CD4-positive, alpha-beta memory T cell (primary cell): ENCODE measurements at regions of chr7 and their contacts with region 1.

Region 1: DNA sequence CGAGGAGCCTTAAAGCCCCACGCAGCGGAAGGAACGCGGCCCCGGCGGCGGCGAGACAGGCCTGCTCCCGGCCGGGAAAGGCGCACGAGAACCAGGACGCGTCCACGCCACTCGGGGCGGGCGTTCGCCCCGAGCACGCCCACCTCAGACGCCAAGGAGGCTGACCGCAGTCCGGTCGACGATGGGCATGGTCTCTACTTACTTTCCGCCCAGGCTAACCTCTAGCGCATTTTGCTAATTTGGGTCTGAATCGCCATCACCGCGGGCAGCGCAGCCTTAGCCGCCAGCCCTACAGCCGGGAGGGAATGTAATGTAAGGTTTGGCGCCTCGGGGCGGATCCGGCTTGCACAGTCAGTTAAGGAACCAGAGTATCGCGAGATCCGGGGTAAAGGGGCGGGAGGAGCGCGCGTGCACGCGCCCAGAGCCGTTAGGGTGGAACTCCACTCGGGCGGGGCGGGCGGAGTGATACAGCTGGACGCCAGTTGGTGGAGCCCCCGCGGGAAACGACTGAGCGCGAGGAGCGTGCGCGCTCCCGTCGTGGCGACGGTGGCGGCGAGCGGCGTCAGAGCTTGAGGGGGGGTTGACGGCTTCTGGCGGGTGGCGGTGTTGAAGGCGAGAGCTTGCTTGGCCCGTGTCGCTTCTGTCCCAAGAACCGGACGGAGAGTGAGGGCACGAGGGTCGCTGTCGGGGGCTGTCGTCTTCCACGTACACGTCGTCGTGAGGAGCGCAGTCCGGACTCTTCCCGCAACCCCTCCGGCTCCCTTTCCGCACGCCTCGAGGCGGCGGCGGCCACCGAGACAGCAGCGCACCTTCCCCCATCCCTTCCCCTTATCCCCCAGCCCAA is at the start of gene LUC7L2:
- DNase-seq: peak; percentile 99
- H3K4me3 ChIP-seq: peak within 1 kb of the TSS; percentile 90 to 100
- H3K4me3 Mint-ChIP-seq: peak within 1 kb of the TSS; percentile 96 to 100 (median 99)
- H3K27ac ChIP-seq: peak within 1 kb of the TSS; percentile 98
- H3K27ac Mint-ChIP-seq: peak within 1 kb of the TSS; percentile 98 to 99 (median 99)
- H3K4me1 ChIP-seq: peaks cover 47% of the 10 kb centered on the region
- H3K4me1 Mint-ChIP-seq: peaks cover 20 to 65% (median 38%) of the 10 kb centered on the region in 4 donors
- H3K27me3 ChIP-seq: no peaks in the 10 kb centered on the region
- H3K27me3 Mint-ChIP-seq: no peaks in the 10 kb centered on the region
- total RNA-seq, gene LUC7L2: 131 to 133 TPM

Region 2: GRCh38 chr7:138459413-138460175 is 900.0 kb before region 1 on chr7:
- CTCF ChIA-PET with region 1: no interaction called
- POLR2A ChIA-PET with region 1: no interaction called
- intact Hi-C with region 1: loop called (anchors 2 kb)
- DNase-seq: peak; percentile 98 to 99 (median 98)
- H3K4me3 ChIP-seq: peak overlapping the region in 1 of 2 donors; percentile 49
- H3K4me3 Mint-ChIP-seq: peak overlapping the region; percentile 73 to 94 (median 84)
- H3K27ac ChIP-seq: peak overlapping the region; percentile 2
- H3K27ac Mint-ChIP-seq: peak overlapping the region; percentile 58 to 95 (median 85)
- H3K4me1 ChIP-seq: peaks cover 15% of the 10 kb centered on the region
- H3K4me1 Mint-ChIP-seq: peaks cover 15 to 30% (median 23%) of the 10 kb centered on the region in 4 donors
- H3K27me3 ChIP-seq: no peaks in the 10 kb centered on the region
- H3K27me3 Mint-ChIP-seq: peaks cover 0 to 3% of the 10 kb centered on the region in 2 donors

Region 3: GRCh38 chr7:139133335-139134139 is 226.1 kb before region 1 on chr7:
- CTCF ChIA-PET with region 1: no interaction called
- POLR2A ChIA-PET with region 1: interaction called, 5 read pairs
- intact Hi-C with region 1: loop called (anchors 1 kb)
- DNase-seq: peak; percentile 86 to 89 (median 88)
- H3K4me3 ChIP-seq: peak overlapping the region; percentile 25 to 55
- H3K4me3 Mint-ChIP-seq: peak overlapping the region; percentile 87 to 97 (median 92)
- H3K27ac ChIP-seq: peak overlapping the region; percentile 56
- H3K27ac Mint-ChIP-seq: peak overlapping the region; percentile 73 to 97 (median 93)
- H3K4me1 ChIP-seq: peaks cover 14% of the 10 kb centered on the region
- H3K4me1 Mint-ChIP-seq: peaks cover 5 to 22% (median 17%) of the 10 kb centered on the region in 4 donors
- H3K27me3 ChIP-seq: no peaks in the 10 kb centered on the region
- H3K27me3 Mint-ChIP-seq: no peaks in the 10 kb centered on the region

Region 4: GRCh38 chr7:139340037-139340807 is 19.4 kb before region 1 on chr7:
- CTCF ChIA-PET with region 1: interaction called, 8 read pairs
- POLR2A ChIA-PET with region 1: interaction called, 107 read pairs
- intact Hi-C with region 1: loop called (anchors 1 kb)
- DNase-seq: peak; percentile 97 to 100 (median 98)
- H3K4me3 ChIP-seq: peak overlapping the region; percentile 95 to 96
- H3K4me3 Mint-ChIP-seq: peak overlapping the region; percentile 95 to 99 (median 98)
- H3K27ac ChIP-seq: peak overlapping the region; percentile 100
- H3K27ac Mint-ChIP-seq: peak overlapping the region; percentile 100
- H3K4me1 ChIP-seq: peaks cover 20% of the 10 kb centered on the region
- H3K4me1 Mint-ChIP-seq: peaks cover 17 to 45% (median 27%) of the 10 kb centered on the region in 4 donors
- H3K27me3 ChIP-seq: no peaks in the 10 kb centered on the region
- H3K27me3 Mint-ChIP-seq: peaks cover 3 to 6% of the 10 kb centered on the region in 2 donors

Region 5: DNA sequence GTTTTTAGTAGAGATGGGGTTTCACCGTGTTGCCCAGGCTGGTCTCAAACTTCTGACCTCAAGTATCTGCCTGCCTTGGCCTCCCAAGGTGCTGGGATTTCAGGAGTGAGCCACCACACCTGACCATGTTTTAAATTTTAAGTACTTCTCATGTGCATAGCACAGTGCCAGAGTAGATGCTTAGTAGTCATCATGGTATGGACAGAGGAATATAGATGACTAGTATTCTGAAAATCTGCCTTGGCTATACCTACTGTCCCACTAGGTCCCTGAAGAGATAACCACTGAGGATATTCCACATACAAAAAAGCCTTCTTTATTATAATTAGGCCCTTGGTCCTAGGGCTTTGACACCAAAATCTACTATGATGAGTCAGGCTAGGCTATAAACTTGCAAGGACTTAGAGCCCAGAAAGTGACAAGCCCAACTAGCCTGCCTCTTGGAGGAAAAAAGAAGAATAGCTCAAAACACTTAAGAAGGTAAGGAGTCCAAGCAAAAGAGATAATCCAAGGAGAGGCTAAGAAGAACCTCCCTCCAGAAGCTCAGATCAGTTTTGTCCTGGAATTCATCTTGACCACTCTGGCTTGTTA is 34.1 kb after region 1 on chr7:
- CTCF ChIA-PET with region 1: no interaction called
- POLR2A ChIA-PET with region 1: interaction called, 15 read pairs
- intact Hi-C with region 1: no loop called
- DNase-seq: no peak
- H3K4me3 ChIP-seq: no peak overlapping the region
- H3K4me3 Mint-ChIP-seq: peak overlapping the region in 5 of 8 donors; percentile 3 to 62 (median 52)
- H3K27ac ChIP-seq: no peak overlapping the region
- H3K27ac Mint-ChIP-seq: peak overlapping the region in 6 of 7 donors; percentile 3 to 88 (median 76)
- H3K4me1 ChIP-seq: peaks cover 31% of the 10 kb centered on the region
- H3K4me1 Mint-ChIP-seq: peaks cover 38 to 58% (median 47%) of the 10 kb centered on the region in 4 donors
- H3K27me3 ChIP-seq: no peaks in the 10 kb centered on the region
- H3K27me3 Mint-ChIP-seq: no peaks in the 10 kb centered on the region